ENCODE measurements at regions of chr19 and their contacts with region 1.

Region 1: DNA sequence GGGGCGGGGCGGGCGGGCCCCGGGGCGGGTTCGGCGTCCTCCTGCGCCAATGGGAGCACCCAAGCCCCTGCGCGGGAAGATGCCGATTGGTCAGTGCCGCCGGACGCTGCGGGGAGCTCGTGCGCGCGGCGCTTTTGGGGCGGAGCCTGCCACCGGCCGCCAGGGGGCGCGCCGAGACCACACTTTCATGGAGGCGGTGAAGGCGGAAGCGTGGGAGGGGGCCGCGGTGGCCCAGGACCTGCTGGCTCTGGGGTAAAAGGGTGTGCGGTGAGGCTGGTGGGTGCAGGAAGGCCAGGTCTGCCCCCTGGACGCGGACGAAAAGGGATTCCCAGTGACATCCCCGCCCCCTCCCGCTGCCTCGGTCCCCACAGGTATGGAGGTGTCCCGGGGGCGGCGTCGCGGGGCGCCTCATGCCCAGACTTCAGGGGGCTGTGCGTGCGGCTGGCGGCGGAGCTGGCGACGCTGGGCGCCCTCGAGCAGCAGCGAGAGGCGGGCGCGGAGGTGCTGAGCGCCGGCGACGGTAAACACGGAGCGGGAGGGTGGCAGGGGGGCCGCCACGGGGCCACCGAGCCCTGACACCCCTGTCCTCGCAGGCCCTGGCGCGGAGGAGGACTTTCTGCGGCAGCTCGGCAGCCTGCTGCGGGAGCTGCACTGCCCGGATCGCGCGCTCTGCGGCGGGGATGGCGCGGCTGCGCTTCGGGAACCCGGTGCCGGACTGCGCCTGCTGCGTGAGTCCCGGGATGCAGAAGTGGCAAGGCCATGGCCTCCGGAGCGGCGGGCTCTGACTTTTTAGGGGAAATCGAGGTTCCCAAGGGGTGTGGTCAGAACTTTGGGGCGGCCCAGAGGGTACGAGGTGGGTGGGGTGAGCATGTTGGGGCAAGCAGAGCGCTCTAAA is at the start of gene FAM98C:
- DNase-seq: peak; percentile 99
- H3K4me3 Mint-ChIP-seq: peak within 1 kb of the TSS; percentile 86
- H3K27ac Mint-ChIP-seq: peak within 1 kb of the TSS; percentile 91
- H3K4me1 Mint-ChIP-seq: peaks cover 20% of the 10 kb centered on the region
- H3K27me3 Mint-ChIP-seq: no peaks in the 10 kb centered on the region
- total RNA-seq, gene FAM98C: 29.8 to 31.9 TPM

Region 2: DNA sequence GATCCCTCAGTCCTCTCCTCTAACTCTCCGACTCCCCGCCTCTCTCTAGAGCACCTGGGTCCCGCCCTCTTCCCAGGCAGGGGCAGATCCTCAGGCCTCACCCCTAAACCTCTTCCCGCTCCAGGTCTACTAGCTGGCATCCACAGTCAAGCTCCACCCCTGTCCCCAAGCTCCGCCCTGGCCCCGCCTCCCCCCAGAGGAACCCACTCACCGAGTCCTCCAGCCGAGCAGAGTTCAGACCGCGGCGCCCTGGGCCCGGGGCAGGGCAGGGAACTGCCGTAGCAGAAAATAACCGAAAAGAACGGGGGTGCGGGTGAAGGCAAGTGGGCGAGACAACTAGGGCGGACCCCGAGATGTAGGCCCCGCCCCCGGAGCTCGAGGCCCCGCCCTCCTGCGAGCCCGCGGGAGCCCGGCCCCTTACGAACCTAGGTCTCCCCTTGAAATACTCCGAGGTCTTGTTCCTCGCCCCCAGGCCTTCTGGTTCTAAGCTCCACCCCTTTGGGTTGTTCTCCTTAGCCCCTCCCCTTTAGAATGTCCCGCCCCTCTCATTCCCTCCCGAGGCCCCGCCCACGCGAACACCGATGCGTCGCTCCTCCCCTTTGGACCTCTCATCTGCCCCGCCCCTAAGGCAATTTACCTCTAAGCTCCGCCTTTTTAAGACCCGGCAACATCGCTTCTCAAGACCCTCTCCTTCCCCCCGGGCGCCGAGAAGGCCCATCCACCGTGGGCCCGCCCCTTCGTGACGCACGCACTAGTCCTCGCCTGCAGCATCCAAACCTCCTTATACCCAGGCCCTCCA is 15.5 kb before region 1 on chr19 and contains the start of gene GGN:
- CTCF ChIA-PET with region 1: interaction called, 33 read pairs
- POLR2A ChIA-PET with region 1: interaction called, 5 read pairs
- intact Hi-C with region 1: no loop called
- DNase-seq: peak; percentile 92
- H3K4me3 Mint-ChIP-seq: peak within 1 kb of the TSS; percentile 78
- H3K27ac Mint-ChIP-seq: peak within 1 kb of the TSS; percentile 69
- H3K4me1 Mint-ChIP-seq: peaks cover 25% of the 10 kb centered on the region
- H3K27me3 Mint-ChIP-seq: peaks cover 3% of the 10 kb centered on the region
- total RNA-seq, gene GGN: 0.41 to 1.2 TPM

Region 3: DNA sequence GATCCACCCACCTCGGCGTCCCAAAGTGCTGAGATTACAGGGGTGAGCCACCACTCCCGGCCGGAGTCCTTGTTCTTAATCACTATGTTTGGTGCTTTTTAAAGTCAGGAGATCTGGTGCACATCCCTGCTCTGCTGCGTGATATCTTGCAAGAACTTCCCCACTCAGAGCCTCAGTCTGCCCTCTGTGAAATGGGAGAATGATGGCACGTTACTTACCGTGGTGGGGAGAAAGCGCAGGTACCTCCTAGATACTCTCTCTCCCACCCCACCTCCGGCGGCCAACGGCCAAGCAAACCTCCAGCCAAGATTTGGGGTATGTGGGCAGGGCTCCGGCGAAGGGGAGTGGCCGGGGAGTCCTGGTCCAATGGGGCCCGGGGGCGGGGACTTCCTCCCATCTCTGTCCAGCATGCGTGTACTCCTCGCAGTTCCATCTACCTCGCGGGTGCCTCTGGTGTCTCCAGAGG is 30.1 kb after region 1 on chr19 and contains the start of gene RYR1:
- CTCF ChIA-PET with region 1: interaction called, 11 read pairs
- POLR2A ChIA-PET with region 1: interaction called, 3 read pairs
- intact Hi-C with region 1: no loop called
- DNase-seq: peak; percentile 79
- H3K4me3 Mint-ChIP-seq: peak within 1 kb of the TSS; percentile 56
- H3K27ac Mint-ChIP-seq: no peak within 1 kb of the TSS
- H3K4me1 Mint-ChIP-seq: peaks cover 28% of the 10 kb centered on the region
- H3K27me3 Mint-ChIP-seq: peaks cover 18% of the 10 kb centered on the region
- total RNA-seq, gene RYR1: 2.4 to 2.5 TPM

Region 4: DNA sequence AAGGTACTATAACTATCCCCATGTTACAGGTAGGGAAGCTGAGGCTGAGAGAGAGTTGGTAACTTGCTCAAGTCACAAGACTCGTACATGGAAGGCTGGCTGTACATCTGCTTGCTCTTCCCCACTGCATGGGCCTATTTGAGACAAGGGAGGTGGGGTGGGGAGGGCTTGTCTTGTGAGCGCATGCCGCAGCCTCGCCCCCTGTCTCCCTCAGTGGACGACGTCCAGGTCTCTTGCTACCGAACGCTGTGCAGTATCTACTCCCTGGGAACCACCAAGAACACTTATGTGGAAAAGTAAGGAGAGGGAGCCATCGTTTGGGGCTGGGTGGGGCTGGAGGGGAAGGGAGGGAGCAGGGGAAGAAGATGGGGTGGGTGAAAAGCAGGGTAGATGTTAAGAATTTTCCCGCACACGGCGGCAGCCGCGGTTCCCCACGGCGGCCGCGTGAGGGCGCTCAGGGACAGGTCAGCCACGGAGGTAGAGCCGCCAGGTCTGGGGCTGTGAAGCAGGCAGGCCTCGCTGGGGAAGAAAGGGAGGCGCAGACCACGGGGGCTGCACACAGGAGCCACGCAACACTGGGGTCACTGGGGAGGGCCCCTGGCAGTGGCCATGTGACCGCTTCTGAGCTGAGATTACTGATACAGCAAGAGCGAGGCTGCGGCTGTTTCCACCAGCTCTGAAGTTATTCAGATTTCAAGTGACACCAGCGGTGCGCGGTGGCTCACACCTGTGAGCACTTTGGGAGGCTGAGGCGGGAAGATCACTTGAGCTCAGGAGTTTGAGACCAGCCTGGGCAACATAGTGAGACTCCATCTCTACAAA is 111.8 kb after region 1 on chr19:
- CTCF ChIA-PET with region 1: interaction called, 30 read pairs
- POLR2A ChIA-PET with region 1: no interaction called
- intact Hi-C with region 1: loop called (anchors 1 kb)
- DNase-seq: peak; percentile 86
- H3K4me3 Mint-ChIP-seq: no peak overlapping the region
- H3K27ac Mint-ChIP-seq: peak overlapping the region; percentile 33
- H3K4me1 Mint-ChIP-seq: peaks cover 22% of the 10 kb centered on the region
- H3K27me3 Mint-ChIP-seq: no peaks in the 10 kb centered on the region

Region 5: GRCh38 chr19:38634757-38635482 is 231.7 kb after region 1 on chr19:
- CTCF ChIA-PET with region 1: interaction called, 31 read pairs
- POLR2A ChIA-PET with region 1: interaction called, 8 read pairs
- intact Hi-C with region 1: loop called (anchors 5 kb)
- DNase-seq: peak; percentile 83
- H3K4me3 Mint-ChIP-seq: no peak overlapping the region
- H3K27ac Mint-ChIP-seq: peak overlapping the region; percentile 81
- H3K4me1 Mint-ChIP-seq: peaks cover 30% of the 10 kb centered on the region
- H3K27me3 Mint-ChIP-seq: no peaks in the 10 kb centered on the region